Mammary epithelial cell (primary cell): ENCODE measurements at regions of chr3 and their contacts with region 1.

Region 1: DNA sequence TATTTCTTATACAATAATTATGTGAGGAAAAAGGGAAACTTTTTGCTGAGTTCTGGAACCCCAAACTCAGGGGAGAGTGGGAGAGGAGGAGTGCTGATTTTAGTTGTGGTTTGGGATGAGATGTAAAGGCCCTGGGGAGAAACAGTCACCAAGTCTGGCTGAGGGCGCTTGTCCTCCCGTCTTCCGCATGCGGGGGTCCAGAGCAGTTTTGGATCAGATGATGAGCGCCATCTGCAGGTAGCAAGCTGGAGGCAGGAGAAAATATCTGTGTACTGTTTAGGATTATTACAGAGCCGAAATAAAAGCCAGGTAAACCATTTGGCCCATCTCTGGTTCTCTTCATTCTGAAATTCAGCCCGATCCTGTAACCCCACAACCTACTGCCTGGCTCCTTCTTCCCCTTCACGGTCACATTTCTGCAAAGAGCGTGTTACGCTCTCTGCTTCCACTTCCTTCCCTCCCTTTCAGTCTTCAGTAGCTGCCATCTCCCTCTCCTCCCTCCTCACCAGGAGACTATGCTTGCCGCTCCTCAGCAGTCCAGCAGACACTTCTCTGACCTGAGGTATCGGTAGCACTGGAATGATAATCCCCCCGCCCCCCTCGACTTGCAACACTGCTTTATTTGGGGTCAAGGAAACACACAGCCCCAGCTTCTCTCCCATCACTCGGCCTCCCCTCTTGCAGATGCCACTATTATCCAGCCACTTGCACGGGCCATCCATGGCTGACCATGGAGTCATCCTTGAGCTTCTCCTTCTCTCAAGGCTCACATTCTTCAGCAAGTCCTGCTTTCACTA is 1.4 kb upstream of the PARP14 start:
- DNase-seq: peak; percentile 63
- H3K4me3 ChIP-seq: peak overlapping the region; percentile 20 to 83 (median 25)
- H3K27ac ChIP-seq: peak overlapping the region; percentile 44
- H3K4me1 ChIP-seq: peaks cover 26% of the 10 kb centered on the region
- H3K27me3 ChIP-seq: no peaks in the 10 kb centered on the region
- CTCF ChIP-seq: peak; percentile 66 to 82

Region 2: GRCh38 chr3:122458992-122459391 is 220.3 kb before region 1 on chr3:
- CTCF ChIA-PET with region 1: interaction called, 4 read pairs
- dilution Hi-C with region 1: no loop called
- in situ Hi-C with region 1: loop called (anchors 5 to 25 kb)
- intact Hi-C with region 1: loop called (anchors 1 kb)
- DNase-seq: peak; percentile 29
- H3K4me3 ChIP-seq: no peak overlapping the region
- H3K27ac ChIP-seq: no peak overlapping the region
- H3K4me1 ChIP-seq: no peaks in the 10 kb centered on the region
- H3K27me3 ChIP-seq: no peaks in the 10 kb centered on the region
- CTCF ChIP-seq: peak; percentile 36 to 42

Region 3: DNA sequence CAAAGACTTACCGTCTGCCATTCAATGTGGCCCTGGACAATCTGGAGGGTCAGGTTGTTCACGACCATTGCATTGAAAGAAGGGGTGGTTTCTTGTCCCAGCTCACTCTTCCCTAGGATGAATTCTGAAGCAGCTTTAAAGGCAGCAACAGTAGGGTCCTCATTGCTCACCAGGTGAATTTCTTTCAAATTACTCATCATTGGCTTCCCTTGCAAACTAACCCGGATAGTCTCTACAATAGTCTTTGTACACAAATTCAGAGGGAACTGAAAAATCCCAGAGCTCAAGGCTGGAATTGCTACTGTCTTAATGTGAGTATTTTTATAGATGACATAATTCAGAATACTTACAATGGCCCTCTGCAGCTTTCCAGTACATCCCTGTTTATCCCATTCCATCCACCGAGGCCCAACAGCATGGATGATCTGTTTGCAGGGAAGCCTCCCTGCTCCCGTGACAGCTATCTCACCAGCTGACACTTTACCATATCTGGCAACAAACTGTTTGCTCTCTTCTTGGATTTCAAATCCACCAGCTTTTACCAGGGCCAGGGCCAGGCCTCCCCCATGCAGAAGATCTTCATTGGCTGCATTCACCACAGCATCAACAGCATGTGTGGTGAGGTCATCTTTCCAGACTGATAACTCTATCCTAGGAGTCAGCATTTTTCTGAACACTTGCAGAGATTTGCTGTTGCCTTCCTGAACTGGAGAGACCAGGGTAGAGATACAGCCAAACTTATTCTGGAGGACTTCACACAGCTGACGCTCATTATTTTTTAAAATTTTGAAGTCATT is 123.8 kb before region 1 on chr3:
- CTCF ChIA-PET with region 1: no interaction called
- dilution Hi-C with region 1: no loop called
- in situ Hi-C with region 1: loop called (anchors 10 to 25 kb)
- intact Hi-C with region 1: loop called (anchors 1 kb)
- DNase-seq: peak; percentile 33
- H3K4me3 ChIP-seq: no peak overlapping the region
- H3K27ac ChIP-seq: no peak overlapping the region
- H3K4me1 ChIP-seq: peaks cover 7% of the 10 kb centered on the region
- H3K27me3 ChIP-seq: no peaks in the 10 kb centered on the region
- CTCF ChIP-seq: no peak

Region 4: GRCh38 chr3:122572940-122573412 is 106.3 kb before region 1 on chr3:
- CTCF ChIA-PET with region 1: no interaction called
- dilution Hi-C with region 1: no loop called
- in situ Hi-C with region 1: loop called (anchors 5 to 25 kb)
- intact Hi-C with region 1: no loop called
- DNase-seq: peak; percentile 77
- H3K4me3 ChIP-seq: no peak overlapping the region
- H3K27ac ChIP-seq: no peak overlapping the region
- H3K4me1 ChIP-seq: peaks cover 14% of the 10 kb centered on the region
- H3K27me3 ChIP-seq: no peaks in the 10 kb centered on the region
- CTCF ChIP-seq: no peak

Region 5: DNA sequence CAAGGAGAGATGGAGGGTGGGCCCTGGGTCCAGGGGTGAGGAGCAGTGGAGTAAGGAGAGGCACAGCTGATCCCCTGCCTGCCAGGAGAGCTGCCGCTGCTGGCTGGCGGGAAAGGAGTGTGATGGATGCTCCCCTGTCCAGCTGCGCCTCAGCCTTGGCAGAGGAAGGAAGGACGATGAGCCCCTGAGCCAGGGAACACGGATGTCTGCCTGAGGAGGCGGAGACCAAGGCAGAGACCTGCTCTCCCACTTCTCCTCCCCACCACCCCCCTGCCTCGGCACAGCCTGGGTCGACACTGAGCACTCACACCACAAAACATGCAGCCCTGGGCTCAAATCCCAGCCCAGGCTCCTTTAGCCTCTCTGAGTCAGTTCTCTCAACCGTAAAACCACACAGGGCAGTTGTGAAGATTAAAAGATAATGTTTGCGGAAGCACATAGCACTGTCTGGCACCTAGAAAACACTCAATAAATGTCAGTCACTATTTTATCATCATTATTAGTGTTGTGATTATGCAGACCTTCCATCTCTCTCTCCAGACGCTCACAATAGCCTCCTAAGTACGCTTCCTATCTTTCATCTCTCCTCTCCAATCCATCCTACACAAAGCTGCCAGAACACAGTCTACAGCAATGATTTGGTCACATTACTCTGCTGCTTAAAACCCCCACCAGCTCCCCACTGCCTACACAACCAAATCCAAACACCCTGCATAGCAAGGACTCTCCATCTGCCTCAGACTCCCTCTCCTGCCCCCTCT is 296.1 kb after region 1 on chr3:
- CTCF ChIA-PET with region 1: no interaction called
- dilution Hi-C with region 1: no loop called
- in situ Hi-C with region 1: no loop called
- intact Hi-C with region 1: no loop called
- DNase-seq: peak; percentile 84
- H3K4me3 ChIP-seq: no peak overlapping the region
- H3K27ac ChIP-seq: no peak overlapping the region
- H3K4me1 ChIP-seq: peaks cover 35% of the 10 kb centered on the region
- H3K27me3 ChIP-seq: no peaks in the 10 kb centered on the region
- CTCF ChIP-seq: no peak